K562 (cell line): ENCODE measurements at regions of chr14 and their contacts with region 1.

Region 1: GRCh38 chr14:70257531-70257930 is 68.8 kb upstream of the SLC8A3 start:
- DNase-seq: peak; percentile 45 to 64 (median 50)
- ATAC-seq: peak; percentile 89
- H3K4me3 ChIP-seq: no peak overlapping the region
- H3K27ac ChIP-seq: no peak overlapping the region
- H3K4me1 ChIP-seq: peaks cover 0 to 4% of the 10 kb centered on the region in 2 experiments; a peak in 1 of 5 replicates
- H3K27me3 ChIP-seq: no peaks in the 10 kb centered on the region; a peak in 1 of 5 replicates
- CTCF ChIP-seq: peak; percentile 60 to 76 (median 64); a peak in 5 of 6 replicates
- EP300 ChIP-seq: no peak
- POLR2A ChIP-seq: no peak
- RAD21 ChIP-seq: peak; percentile 55 to 77

Region 2: DNA sequence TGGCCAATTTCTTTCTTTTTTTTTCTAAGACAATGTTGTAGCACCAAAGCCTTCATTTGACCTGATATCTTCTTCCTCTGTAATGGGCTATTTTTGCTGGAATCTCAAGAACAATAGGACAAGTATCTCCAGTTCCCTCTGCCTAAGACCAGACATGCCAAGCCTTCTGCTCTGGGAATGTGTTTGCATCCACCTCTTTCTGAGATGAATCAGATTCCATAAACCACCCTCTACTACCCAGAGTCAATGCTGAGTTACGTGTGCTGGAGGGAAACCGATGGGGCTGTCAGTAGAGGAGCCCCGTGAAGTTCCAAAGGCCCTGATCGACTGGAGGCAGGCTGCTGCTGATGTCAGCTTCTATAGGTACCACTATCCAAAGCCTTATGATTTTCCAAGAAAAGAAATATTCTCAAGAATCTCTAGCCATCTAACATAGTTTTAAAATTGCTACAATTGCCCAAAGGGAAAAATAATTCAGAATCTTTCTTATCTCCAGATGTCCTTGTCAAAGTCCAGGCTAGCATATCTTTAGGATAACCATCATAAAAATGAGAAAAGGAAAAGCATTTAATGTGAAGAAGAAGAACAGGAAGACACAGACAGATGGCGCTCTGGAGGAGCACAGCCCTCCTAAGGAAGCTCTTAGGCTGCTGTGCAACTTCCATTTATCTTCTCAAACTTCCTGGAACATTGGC is 170.7 kb before region 1 on chr14:
- CTCF ChIA-PET with region 1: interaction called, 5 read pairs
- POLR2A ChIA-PET with region 1: no interaction called
- in situ Hi-C with region 1: no loop called
- intact Hi-C with region 1: loop called (anchors 5 kb)
- DNase-seq: peak in 3 of 4 experiments; percentile 6 to 53 (median 19)
- ATAC-seq: peak; percentile 59; the same call in 2 of the 3 replicates
- H3K4me3 ChIP-seq: no peak overlapping the region
- H3K27ac ChIP-seq: no peak overlapping the region
- H3K4me1 ChIP-seq: no peaks in the 10 kb centered on the region; a peak in 1 of 5 replicates
- H3K27me3 ChIP-seq: peaks cover 0 to 2% of the 10 kb centered on the region in 2 experiments; a peak in 2 of 5 replicates
- CTCF ChIP-seq: peak; percentile 52 to 62 (median 57); a peak in 5 of 6 replicates
- EP300 ChIP-seq: no peak
- POLR2A ChIP-seq: no peak
- RAD21 ChIP-seq: peak; percentile 53 to 72

Region 3: GRCh38 chr14:70213721-70214282 is 43.7 kb before region 1 on chr14:
- CTCF ChIA-PET with region 1: no interaction called
- POLR2A ChIA-PET with region 1: no interaction called
- in situ Hi-C with region 1: no loop called
- intact Hi-C with region 1: loop called (anchors 5 kb)
- DNase-seq: no peak
- ATAC-seq: no peak
- H3K4me3 ChIP-seq: no peak overlapping the region
- H3K27ac ChIP-seq: no peak overlapping the region
- H3K4me1 ChIP-seq: no peaks in the 10 kb centered on the region
- H3K27me3 ChIP-seq: no peaks in the 10 kb centered on the region
- CTCF ChIP-seq: no peak
- EP300 ChIP-seq: no peak
- POLR2A ChIP-seq: no peak
- RAD21 ChIP-seq: no peak

Region 4: GRCh38 chr14:70237710-70238109 is 19.8 kb before region 1 on chr14:
- CTCF ChIA-PET with region 1: no interaction called
- POLR2A ChIA-PET with region 1: interaction called, 3 read pairs
- in situ Hi-C with region 1: no loop called
- intact Hi-C with region 1: loop called (anchors 1 kb)
- DNase-seq: peak; percentile 65 to 92 (median 75)
- ATAC-seq: peak; percentile 96
- H3K4me3 ChIP-seq: no peak overlapping the region
- H3K27ac ChIP-seq: peak overlapping the region; percentile 86
- H3K4me1 ChIP-seq: peaks cover 9 to 25% of the 10 kb centered on the region in 2 experiments
- H3K27me3 ChIP-seq: no peaks in the 10 kb centered on the region
- CTCF ChIP-seq: no peak
- EP300 ChIP-seq: peak; percentile 95
- POLR2A ChIP-seq: no peak
- RAD21 ChIP-seq: no peak